Caco-2 (cell line): ENCODE measurements at regions of chrX and their contacts with region 1.

Region 1: GRCh38 chrX:106933041-106933961 is 13.1 kb downstream of the CLDN2 start:
- DNase-seq: peak; percentile 77 to 87
- H3K4me3 ChIP-seq: no peak overlapping the region
- H3K4me3 Mint-ChIP-seq: peak overlapping the region; percentile 50
- H3K27ac Mint-ChIP-seq: peak overlapping the region; percentile 84
- H3K4me1 ChIP-seq: peaks cover 55% of the 10 kb centered on the region
- H3K4me1 Mint-ChIP-seq: peaks cover 10% of the 10 kb centered on the region
- H3K27me3 ChIP-seq: no peaks in the 10 kb centered on the region
- H3K27me3 Mint-ChIP-seq: no peaks in the 10 kb centered on the region
- CTCF ChIP-seq: no peak

Region 2: DNA sequence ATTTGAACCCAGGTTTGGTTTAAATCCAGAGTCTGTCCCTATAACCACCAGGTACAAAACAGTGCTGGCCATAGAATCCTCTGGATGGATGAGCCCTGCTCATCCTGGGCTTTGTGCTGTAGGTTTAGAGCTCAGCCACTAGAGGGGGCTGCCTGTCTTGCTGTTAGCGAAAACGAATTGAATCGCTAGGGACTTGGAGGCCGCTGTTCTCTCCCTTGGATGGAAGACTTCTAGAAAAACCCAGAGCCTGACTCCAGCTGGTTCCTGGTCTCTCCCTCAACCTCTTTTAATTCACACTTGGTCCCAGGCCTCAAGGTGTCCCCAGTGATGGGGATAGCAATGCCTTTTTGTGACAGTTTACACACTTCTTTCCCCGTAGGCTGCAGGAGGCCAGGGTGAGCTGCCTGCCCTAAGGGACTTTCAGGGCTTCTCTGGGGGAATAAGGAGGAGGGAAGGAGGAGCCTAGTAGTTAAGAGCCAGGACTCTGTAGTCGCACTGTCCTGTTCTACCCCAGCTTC is 38.9 kb before region 1 on chrX:
- CTCF ChIA-PET with region 1: interaction called, 10 read pairs
- POLR2A ChIA-PET with region 1: no interaction called
- intact Hi-C with region 1: loop called (anchors 1 kb)
- DNase-seq: peak; percentile 72 to 73
- H3K4me3 ChIP-seq: no peak overlapping the region
- H3K4me3 Mint-ChIP-seq: no peak overlapping the region
- H3K27ac Mint-ChIP-seq: no peak overlapping the region
- H3K4me1 ChIP-seq: peaks cover 23% of the 10 kb centered on the region
- H3K4me1 Mint-ChIP-seq: peaks cover 13% of the 10 kb centered on the region
- H3K27me3 ChIP-seq: no peaks in the 10 kb centered on the region
- H3K27me3 Mint-ChIP-seq: no peaks in the 10 kb centered on the region
- CTCF ChIP-seq: peak; percentile 78 to 80

Region 3: GRCh38 chrX:106903291-106903824 is 29.9 kb before region 1 on chrX and contains the start of gene RIPPLY1:
- CTCF ChIA-PET with region 1: interaction called, 10 read pairs
- POLR2A ChIA-PET with region 1: interaction called, 3 read pairs
- intact Hi-C with region 1: loop called (anchors 1 kb)
- DNase-seq: no peak
- H3K4me3 ChIP-seq: no peak within 1 kb of the TSS
- H3K4me3 Mint-ChIP-seq: no peak within 1 kb of the TSS
- H3K27ac Mint-ChIP-seq: no peak within 1 kb of the TSS
- H3K4me1 ChIP-seq: peaks cover 40% of the 10 kb centered on the region
- H3K4me1 Mint-ChIP-seq: peaks cover 17% of the 10 kb centered on the region
- H3K27me3 ChIP-seq: no peaks in the 10 kb centered on the region
- H3K27me3 Mint-ChIP-seq: no peaks in the 10 kb centered on the region
- CTCF ChIP-seq: no peak
- total RNA-seq, gene RIPPLY1: not detected in 2 replicates

Region 4: DNA sequence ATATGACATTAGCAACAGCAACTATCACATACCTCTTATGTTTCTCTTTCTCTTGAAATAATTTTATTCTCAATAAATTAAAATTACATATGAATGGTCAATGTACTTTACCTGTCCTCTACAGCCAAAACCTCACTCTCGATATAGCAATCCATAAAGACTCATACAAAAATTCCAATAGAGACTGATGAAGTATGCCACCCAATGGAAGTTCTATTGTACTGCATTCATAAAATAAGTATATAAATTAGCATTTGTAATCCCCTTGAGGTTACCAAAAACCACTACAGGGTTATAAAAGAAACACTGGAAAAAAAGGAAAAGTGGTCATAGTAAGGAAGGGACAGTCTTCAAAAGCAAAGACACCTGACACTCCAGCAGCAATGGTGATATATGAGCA is 19.7 kb after region 1 on chrX:
- CTCF ChIA-PET with region 1: no interaction called
- POLR2A ChIA-PET with region 1: no interaction called
- intact Hi-C with region 1: loop called (anchors 1 kb)
- DNase-seq: no peak
- H3K4me3 ChIP-seq: no peak overlapping the region
- H3K4me3 Mint-ChIP-seq: no peak overlapping the region
- H3K27ac Mint-ChIP-seq: no peak overlapping the region
- H3K4me1 ChIP-seq: peaks cover 37% of the 10 kb centered on the region
- H3K4me1 Mint-ChIP-seq: peaks cover 21% of the 10 kb centered on the region
- H3K27me3 ChIP-seq: no peaks in the 10 kb centered on the region
- H3K27me3 Mint-ChIP-seq: no peaks in the 10 kb centered on the region
- CTCF ChIP-seq: peak; percentile 19 to 40

Region 5: DNA sequence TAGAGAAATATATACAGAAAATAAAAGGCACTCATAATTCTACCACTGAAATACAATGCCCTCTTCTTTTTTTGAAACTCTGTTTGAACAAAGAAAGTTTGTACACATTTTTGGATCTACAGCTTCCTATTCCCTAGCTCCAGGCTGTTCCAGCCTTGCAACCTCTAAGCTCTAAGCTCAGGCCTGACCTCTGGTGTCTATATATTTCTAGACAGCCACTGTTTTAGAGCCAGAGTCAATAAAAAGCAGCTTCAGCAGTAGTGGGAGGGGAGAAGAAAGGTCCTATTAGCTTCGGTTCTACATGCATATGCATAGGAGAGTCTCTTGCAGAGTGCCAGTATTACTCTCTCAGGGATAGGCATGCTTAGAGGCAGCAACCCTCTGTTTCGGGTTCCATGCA is 26.6 kb after region 1 on chrX:
- CTCF ChIA-PET with region 1: interaction called, 13 read pairs
- POLR2A ChIA-PET with region 1: no interaction called
- intact Hi-C with region 1: loop called (anchors 1 kb)
- DNase-seq: peak; percentile 38 to 49
- H3K4me3 ChIP-seq: no peak overlapping the region
- H3K4me3 Mint-ChIP-seq: no peak overlapping the region
- H3K27ac Mint-ChIP-seq: no peak overlapping the region
- H3K4me1 ChIP-seq: peaks cover 11% of the 10 kb centered on the region
- H3K4me1 Mint-ChIP-seq: peaks cover 11% of the 10 kb centered on the region
- H3K27me3 ChIP-seq: no peaks in the 10 kb centered on the region
- H3K27me3 Mint-ChIP-seq: no peaks in the 10 kb centered on the region
- CTCF ChIP-seq: peak; percentile 23 to 24

Region 6: DNA sequence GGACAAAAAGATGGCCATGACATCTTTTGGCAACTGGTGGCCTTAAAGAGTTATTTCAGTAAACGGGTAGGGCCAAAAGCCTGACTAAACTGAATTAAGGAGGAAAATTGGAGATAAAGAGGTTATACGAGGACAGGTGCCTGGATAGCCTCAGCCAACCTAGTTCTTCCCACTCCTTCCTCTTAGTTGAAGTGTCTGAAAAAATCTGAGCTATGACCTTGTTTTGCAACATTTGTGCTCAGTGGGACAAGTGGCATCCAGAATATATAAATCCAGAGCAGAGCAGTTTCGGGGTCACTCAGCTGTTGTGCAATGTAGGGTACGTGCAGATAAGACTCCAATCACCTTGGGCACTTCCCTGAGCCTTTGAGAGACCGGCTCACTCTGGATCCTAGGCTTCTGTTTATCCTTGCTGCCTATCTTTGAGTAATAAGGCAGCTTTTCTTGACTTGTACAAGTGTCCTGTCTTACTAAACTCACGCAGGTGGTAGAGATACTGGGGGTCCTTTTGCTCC is 117.0 kb after region 1 on chrX:
- CTCF ChIA-PET with region 1: no interaction called
- POLR2A ChIA-PET with region 1: no interaction called
- intact Hi-C with region 1: no loop called
- DNase-seq: no peak
- H3K4me3 ChIP-seq: no peak overlapping the region
- H3K4me3 Mint-ChIP-seq: no peak overlapping the region
- H3K27ac Mint-ChIP-seq: no peak overlapping the region
- H3K4me1 ChIP-seq: no peaks in the 10 kb centered on the region
- H3K4me1 Mint-ChIP-seq: no peaks in the 10 kb centered on the region
- H3K27me3 ChIP-seq: no peaks in the 10 kb centered on the region
- H3K27me3 Mint-ChIP-seq: peaks cover 4% of the 10 kb centered on the region
- CTCF ChIP-seq: no peak